Panc1 (cell line): ENCODE measurements at regions of chr4 and their contacts with region 1.

Region 1: DNA sequence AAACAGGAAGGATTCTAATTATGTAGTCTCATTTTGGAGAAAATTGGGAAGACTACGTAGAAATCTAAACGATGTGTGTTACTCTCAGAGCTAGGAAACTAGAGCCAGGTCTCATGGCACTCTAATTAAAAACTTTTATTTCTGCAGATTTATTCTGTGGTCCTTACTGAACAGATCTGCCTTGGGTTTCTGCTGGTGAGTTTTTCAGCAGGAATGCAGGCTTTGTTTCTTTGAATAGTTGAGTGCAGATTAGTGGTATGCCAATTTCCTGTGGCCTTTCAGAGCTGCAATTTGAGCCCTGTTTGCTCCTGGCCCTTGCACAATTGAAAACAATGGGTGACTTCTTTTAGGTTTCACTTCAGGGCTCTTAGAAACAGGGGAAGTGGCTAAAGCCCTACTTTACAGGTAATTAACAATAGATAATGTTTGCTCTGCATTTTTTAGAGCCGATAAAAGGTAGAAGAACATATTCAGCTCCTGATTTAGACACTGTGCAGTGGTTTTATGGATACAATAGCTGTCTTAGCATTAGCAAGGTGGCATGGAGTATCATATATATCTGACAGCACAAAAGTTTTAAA is 21.8 kb downstream of the SPRY1 start:
- DNase-seq: no peak
- ATAC-seq: peak; percentile 88
- H3K4me3 ChIP-seq: 0 out of 4 replicates have a peak overlapping the region, but pooled peaks of 1 of the 2 experiments have one; percentile 1
- H3K27ac ChIP-seq: peak overlapping the region; percentile 94
- H3K4me1 ChIP-seq: peaks cover 38% of the 10 kb centered on the region
- H3K27me3 ChIP-seq: no peaks in the 10 kb centered on the region
- CTCF ChIP-seq: no peak

Region 2: DNA sequence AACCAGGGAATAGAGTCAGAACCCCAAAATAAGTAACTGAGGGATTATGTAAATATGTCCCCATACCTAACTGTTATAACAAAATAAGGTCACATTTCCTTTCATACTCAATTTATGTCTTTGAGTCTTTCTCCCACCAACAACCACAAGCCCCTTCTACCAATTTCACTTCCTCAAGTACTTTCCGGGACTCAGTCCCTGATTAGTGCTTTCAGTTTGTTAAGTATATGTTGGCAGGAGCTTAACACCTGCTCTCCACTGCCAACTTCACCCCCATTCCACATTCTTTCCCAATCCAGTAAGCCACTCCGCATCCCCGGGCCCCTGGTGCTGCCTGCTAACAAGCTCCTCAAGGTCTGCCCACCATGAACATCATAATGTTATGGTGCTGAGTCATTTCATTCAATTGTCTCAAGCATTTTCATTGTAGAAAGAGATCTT is 93.2 kb before region 1 on chr4:
- CTCF ChIA-PET with region 1: no interaction called
- POLR2A ChIA-PET with region 1: no interaction called
- in situ Hi-C with region 1: no loop called
- intact Hi-C with region 1: no loop called
- DNase-seq: no peak
- ATAC-seq: no peak
- H3K4me3 ChIP-seq: no peak overlapping the region
- H3K27ac ChIP-seq: no peak overlapping the region
- H3K4me1 ChIP-seq: no peaks in the 10 kb centered on the region
- H3K27me3 ChIP-seq: no peaks in the 10 kb centered on the region
- CTCF ChIP-seq: no peak

Region 3: DNA sequence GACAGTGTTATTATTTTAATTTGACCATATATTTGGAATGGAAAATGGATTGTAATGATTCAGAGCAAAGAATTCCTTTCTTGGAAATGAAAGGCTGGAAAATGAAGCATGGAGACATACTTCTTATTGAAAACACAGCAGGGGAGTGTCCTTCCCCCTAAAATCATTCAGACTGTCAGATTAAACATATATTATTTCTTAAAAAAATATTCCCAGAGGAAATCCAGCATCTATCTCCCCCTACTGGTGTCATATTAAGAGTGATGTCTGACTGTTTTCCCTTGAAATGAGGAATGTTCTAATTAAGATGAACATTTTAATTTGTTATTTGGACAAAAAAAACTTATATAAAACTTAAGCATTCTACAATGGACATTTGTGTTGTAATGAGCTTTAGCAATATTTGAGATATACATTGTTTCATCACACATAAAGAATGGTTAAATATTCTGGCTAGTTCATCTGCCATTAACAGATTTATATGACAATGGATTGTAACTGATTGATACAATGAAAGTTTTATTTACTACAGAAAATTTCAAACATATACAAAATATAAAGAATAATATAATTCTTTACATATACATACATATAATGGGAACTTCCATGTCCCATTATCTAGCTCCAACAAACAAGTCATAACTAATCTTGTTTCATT is 242.8 kb after region 1 on chr4:
- CTCF ChIA-PET with region 1: no interaction called
- POLR2A ChIA-PET with region 1: interaction called, 3 read pairs
- in situ Hi-C with region 1: no loop called
- intact Hi-C with region 1: loop called (anchors 10 kb)
- DNase-seq: no peak
- ATAC-seq: no peak
- H3K4me3 ChIP-seq: no peak overlapping the region
- H3K27ac ChIP-seq: peak overlapping the region; percentile 56; the same call in 1 of the 2 replicates
- H3K4me1 ChIP-seq: no peaks in the 10 kb centered on the region
- H3K27me3 ChIP-seq: no peaks in the 10 kb centered on the region
- CTCF ChIP-seq: peak; percentile 42; the same call in 1 of the 2 replicates